Activated naive CD4-positive, alpha-beta T cell treated with anti-CD3 and anti-CD28 coated beads for 36 hours (primary cell): ENCODE measurements at regions of chr19 and their contacts with region 1.

Region 1: DNA sequence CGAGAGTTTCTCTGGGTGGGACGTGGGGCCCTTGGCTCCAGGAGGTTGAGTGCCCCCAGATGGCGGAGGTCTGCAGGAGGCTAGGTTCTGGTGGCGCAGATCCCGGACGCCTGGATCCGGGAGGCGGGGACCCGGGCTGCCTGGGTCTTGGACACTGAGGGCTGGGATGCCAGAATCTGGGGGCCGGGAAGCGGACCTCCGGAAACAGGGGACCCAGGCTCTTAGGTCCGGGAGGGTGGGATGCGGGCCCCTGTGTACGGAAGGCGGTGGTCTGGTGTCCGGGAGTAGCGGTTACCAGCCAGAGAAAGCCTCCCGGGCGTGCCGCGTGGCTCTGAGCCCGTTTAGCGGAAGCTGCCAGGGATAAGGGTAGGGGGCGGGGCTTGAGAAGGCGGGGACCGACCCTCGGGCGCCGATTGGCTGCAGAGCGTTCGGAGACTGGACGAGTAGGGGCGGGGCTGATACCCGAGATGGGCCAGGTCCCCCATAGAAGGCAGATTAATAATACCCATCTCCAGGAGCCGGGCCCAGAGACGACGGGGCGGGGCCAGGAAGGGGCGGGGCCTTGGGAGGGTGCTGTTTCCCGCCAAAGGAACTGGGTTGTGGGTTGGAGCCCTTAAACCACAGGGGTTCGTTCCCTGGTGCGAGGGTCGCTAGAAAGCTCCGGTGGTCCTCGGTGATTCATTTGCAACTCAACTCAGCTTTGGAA is at the start of gene SLC1A5:
- DNase-seq: peak; percentile 99
- H3K4me3 Mint-ChIP-seq: peak within 1 kb of the TSS; percentile 95
- H3K27ac Mint-ChIP-seq: peak within 1 kb of the TSS; percentile 99
- H3K4me1 Mint-ChIP-seq: peaks cover 38% of the 10 kb centered on the region
- H3K27me3 Mint-ChIP-seq: no peaks in the 10 kb centered on the region
- total RNA-seq, gene SLC1A5: 139 TPM

Region 2: GRCh38 chr19:46173886-46174507 is 614.4 kb before region 1 on chr19:
- CTCF ChIA-PET with region 1: no interaction called
- intact Hi-C with region 1: no loop called
- DNase-seq: no peak
- H3K4me3 Mint-ChIP-seq: no peak overlapping the region
- H3K27ac Mint-ChIP-seq: no peak overlapping the region
- H3K4me1 Mint-ChIP-seq: no peaks in the 10 kb centered on the region
- H3K27me3 Mint-ChIP-seq: peaks cover 46% of the 10 kb centered on the region

Region 3: GRCh38 chr19:46600384-46601317 is 187.8 kb before region 1 on chr19:
- CTCF ChIA-PET with region 1: no interaction called
- intact Hi-C with region 1: loop called (anchors 2 kb)
- DNase-seq: peak; percentile 97
- H3K4me3 Mint-ChIP-seq: peak overlapping the region; percentile 96
- H3K27ac Mint-ChIP-seq: peak overlapping the region; percentile 100
- H3K4me1 Mint-ChIP-seq: peaks cover 32% of the 10 kb centered on the region
- H3K27me3 Mint-ChIP-seq: no peaks in the 10 kb centered on the region

Region 4: DNA sequence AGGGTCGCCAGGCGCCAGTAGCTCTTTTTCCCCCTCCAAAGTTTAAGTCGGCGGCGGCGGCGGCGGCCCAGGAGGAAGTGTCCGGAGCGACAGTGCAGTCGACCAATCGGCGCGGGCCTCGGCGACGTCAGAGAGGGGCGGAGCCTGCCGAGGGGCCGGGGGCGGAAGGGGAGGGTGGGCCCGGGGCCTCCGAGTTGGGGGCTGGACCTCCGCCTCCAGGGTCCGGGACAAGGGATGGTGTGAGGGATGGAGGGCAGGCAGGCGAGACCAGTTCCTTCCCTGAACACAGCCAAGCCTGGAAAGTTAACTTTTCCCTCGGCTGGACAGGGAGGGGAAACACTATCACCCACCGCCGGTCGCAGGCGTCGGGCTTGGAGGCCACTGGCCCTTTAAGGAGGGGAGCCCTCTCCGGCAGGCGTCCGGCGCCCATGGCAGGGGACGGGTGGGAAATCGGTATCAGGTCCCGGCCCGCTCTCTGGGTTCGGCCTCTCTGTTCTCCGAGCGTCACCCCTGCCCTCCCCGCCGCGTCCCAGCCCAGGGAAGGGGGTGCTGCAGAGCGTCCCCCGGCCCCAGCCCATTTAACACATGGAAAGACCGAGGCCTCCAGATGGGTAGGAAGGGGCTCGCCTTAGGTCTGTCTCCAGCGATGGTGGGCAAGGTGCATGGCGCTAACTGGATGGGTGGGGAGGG is 71.2 kb before region 1 on chr19 and contains the start of gene PRKD2:
- CTCF ChIA-PET with region 1: no interaction called
- intact Hi-C with region 1: loop called (anchors 1 kb)
- DNase-seq: peak; percentile 93
- H3K4me3 Mint-ChIP-seq: peak within 1 kb of the TSS; percentile 96
- H3K27ac Mint-ChIP-seq: peak within 1 kb of the TSS; percentile 94
- H3K4me1 Mint-ChIP-seq: peaks cover 46% of the 10 kb centered on the region
- H3K27me3 Mint-ChIP-seq: no peaks in the 10 kb centered on the region
- total RNA-seq, gene PRKD2: 62.2 to 62.3 TPM

Region 5: GRCh38 chr19:46766569-46767317 is 21.7 kb before region 1 on chr19:
- CTCF ChIA-PET with region 1: interaction called, 13 read pairs
- intact Hi-C with region 1: no loop called
- DNase-seq: peak; percentile 74
- H3K4me3 Mint-ChIP-seq: no peak overlapping the region
- H3K27ac Mint-ChIP-seq: no peak overlapping the region
- H3K4me1 Mint-ChIP-seq: peaks cover 2% of the 10 kb centered on the region
- H3K27me3 Mint-ChIP-seq: no peaks in the 10 kb centered on the region

Region 6: DNA sequence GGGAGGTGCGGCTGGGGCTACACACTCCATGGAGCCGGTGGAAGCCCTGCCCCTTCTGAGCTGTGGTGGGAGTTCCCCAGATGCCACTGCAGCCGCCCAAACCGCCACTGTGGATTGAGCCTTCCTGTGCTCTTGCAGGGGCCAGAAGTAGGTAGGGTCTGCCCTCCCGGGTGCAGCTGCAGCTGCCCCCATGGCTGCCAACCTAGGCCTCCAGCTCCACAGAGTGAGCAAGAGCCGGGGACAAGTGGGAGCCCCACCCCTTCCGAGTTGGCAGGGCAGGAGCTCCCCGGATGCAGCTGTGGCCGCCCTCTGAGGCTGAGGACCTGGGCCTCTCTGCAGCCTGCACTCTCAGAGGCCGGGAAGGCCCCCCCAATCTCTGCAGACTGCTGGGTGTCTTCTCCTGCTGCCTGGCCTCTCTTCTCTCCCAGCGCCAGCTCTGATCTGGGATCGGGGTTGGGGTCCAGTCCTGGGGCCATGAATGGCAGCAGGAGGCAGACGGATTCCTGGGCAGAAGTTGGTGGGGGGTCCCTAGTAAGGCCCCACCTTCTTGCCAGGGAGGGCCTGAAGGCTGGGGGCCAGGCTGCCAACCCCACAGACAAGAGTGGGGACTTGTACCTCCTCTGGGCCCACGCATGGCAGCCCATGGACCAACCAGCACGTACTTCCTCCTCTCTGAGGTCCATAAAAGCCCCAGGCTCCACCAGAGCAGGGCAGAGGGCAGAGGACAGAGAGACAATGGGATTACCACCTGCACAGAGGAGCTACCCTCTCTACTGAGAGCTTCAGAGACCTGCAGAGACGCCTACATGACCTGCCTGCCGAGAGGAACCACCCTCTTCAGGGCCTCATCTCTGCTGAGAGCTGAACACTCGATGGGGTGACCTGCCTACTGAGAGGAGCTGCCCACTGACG is 33.3 kb after region 1 on chr19:
- CTCF ChIA-PET with region 1: interaction called, 4 read pairs
- intact Hi-C with region 1: loop called (anchors 1 kb)
- DNase-seq: peak; percentile 82
- H3K4me3 Mint-ChIP-seq: no peak overlapping the region
- H3K27ac Mint-ChIP-seq: peak overlapping the region; percentile 26
- H3K4me1 Mint-ChIP-seq: peaks cover 29% of the 10 kb centered on the region
- H3K27me3 Mint-ChIP-seq: no peaks in the 10 kb centered on the region

Region 7: DNA sequence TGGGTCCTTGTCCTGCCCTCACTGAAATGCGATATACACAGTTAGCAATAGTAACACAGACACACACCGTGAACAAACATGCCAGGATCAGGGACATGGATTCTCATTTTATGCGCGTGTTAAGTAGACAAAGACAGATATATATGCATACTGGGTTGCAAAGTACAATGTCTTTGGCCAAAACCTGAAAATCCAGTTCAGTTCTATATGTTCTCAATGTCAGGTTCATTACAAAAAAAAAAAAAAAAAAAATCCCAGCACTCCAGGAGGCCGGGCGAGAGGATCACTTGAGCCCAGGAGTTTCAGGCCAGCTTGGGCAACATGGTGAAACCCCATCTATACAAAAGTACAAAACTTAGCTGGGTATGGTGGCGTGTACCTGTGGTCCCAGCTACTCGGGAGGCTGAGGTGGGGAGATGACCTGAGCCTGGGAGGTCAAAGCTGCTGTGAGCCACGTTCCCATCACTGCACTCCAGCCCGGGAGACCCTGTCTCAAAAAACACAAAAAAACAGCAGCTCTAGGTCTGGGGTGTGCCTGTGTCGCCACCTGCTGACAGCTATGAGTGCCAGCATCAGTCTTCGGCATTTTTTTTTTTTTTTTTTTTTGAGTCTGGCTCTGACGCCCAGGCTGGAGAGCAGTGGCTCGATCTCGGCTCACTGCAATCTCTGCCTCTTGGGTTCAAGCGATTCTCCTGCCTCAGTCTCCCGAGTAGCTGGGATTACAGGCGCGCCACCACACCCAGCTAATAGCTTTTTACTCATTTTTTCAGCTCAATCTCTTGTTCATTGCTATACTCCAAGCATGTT is 51.9 kb after region 1 on chr19:
- CTCF ChIA-PET with region 1: interaction called, 9 read pairs
- intact Hi-C with region 1: loop called (anchors 1 kb)
- DNase-seq: peak; percentile 61
- H3K4me3 Mint-ChIP-seq: no peak overlapping the region
- H3K27ac Mint-ChIP-seq: no peak overlapping the region
- H3K4me1 Mint-ChIP-seq: no peaks in the 10 kb centered on the region
- H3K27me3 Mint-ChIP-seq: no peaks in the 10 kb centered on the region

Region 8: DNA sequence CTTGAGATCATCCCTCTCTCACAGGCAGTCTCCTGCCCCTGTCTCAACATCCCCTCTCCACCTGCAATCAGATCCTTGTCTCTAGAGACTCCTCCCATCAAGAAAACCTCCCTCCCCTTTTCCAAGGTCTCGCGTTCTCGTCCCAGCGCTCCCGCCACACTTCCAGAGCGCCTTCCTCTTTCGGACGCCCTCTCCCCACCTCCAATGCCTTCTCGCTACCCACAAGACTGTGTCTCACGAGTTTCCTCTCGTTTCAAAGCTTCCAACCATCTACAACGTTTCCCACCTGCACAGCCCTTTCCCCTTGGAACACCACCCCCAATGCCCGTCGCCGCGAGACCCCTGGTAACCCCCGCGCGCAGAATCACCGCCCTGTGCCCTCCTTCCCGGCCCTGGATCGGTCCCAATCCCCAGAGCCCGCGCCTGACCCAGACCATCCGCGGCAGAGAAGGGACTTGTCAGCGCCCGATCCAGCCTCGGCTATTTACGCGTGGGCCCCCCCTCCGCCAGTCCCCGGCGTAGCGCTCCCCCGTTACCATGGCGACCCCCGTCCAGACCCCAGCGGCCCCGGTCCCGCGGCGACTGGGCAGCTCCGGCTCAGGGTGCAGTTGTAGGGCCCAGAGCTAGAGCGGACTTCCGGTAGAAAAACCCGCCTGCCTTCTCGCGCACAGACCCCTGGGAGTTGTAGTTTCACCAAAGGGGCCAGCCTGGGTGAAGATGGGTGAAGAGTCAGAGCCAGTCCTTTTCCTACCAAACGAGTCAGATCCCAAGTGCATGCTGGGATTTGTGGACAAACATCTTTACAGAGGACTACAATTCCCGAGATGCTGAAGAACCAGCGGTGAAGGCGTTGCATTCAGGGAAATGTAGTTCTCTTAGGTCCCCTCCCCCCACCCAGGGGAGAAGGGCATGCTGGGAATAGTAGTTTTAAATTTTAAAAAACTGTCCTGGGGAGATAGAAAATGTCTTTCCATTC is 62.1 kb after region 1 on chr19 and contains the start of gene AP2S1:
- CTCF ChIA-PET with region 1: no interaction called
- intact Hi-C with region 1: loop called (anchors 2 kb)
- DNase-seq: peak; percentile 96
- H3K4me3 Mint-ChIP-seq: peak within 1 kb of the TSS; percentile 90
- H3K27ac Mint-ChIP-seq: peak within 1 kb of the TSS; percentile 74
- H3K4me1 Mint-ChIP-seq: peaks cover 15% of the 10 kb centered on the region
- H3K27me3 Mint-ChIP-seq: no peaks in the 10 kb centered on the region
- total RNA-seq, gene AP2S1: 112 to 118 TPM